Mammary epithelial cell (primary cell): ENCODE measurements at regions of chr4 and their contacts with region 1.

Region 1: DNA sequence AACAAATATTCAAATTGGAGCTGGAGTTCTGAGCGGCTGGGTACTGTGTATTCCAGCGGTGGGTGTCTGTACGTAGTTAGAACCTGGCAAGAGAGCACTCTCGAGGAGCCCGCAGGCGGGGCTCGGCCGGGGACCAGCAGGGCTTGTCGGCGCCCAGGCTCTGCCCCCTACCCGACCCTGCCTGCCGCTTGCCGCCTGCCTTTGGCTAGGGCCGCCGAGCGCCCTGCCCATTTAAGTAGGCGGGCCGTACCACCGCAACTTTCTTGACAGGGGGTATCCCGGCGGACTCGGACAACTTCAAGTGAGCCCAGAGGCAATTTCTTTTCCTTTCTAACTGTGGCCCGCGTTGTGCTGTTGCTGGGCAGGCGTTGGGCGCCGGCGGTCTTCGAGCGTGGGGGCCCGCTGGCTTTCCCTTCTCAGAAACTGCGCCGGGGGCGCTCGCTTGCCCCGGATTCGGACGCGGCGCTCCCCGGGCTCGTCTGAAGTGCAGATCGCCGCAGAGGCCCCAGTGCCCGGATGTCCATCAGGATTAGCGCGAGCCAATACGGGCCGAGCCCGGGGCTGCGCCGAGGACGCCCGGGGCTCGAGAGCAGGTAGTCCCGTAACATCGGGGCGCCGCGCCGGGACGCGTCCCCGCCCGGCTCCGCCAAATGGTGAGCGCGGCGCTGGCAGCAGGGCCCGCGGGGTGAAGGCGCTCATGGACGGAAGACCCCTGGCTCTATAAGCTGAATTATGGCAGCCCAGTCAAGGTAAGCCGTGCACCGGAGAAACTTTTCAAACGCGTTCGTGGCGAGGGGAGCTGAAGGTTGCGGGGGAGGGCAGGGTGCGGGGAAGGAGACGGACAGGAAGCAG is 72.1 kb downstream of the AFF1 start:
- DNase-seq: peak; percentile 93
- H3K4me3 ChIP-seq: peak overlapping the region; percentile 65 to 85 (median 81)
- H3K27ac ChIP-seq: peak overlapping the region; percentile 77
- H3K4me1 ChIP-seq: peaks cover 40% of the 10 kb centered on the region
- H3K27me3 ChIP-seq: no peaks in the 10 kb centered on the region
- CTCF ChIP-seq: peak in 1 of 2 donors; percentile 16

Region 2: GRCh38 chr4:86497980-86498862 is 508.7 kb before region 1 on chr4:
- CTCF ChIA-PET with region 1: no interaction called
- dilution Hi-C with region 1: no loop called
- in situ Hi-C with region 1: no loop called
- intact Hi-C with region 1: loop called (anchors 1 kb)
- DNase-seq: peak; percentile 40
- H3K4me3 ChIP-seq: no peak overlapping the region
- H3K27ac ChIP-seq: no peak overlapping the region
- H3K4me1 ChIP-seq: peaks cover 26% of the 10 kb centered on the region
- H3K27me3 ChIP-seq: no peaks in the 10 kb centered on the region
- CTCF ChIP-seq: peak; percentile 78 to 89

Region 3: DNA sequence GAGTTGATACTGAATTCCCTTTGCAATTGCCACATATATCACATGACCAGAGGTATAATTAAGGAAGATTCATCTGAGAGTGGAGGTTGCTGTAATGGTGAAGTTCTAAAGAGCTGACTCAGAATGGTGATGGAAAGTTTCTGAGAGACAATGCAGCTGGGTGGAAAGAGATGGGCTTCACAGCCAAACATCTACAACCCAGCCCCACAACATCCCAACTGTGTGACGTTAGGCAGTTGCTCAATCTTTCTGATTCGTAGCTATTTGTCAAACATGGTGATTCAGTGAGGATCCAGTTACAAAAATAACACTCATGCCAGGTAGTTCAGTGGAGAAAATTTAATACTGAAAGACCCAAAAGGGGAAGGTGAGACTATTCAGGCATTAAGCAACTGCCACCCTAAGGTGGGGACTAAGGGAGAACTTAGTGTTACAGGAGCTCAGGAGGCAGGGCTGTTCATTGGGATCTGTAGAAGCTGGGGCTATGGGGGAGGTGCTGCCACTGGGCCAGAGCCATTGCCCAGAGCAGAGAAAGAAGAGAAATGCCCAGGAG is 79.0 kb before region 1 on chr4:
- CTCF ChIA-PET with region 1: no interaction called
- dilution Hi-C with region 1: loop called (anchors 5 kb)
- in situ Hi-C with region 1: loop called in 1 of 2 experiments (anchors 5 kb)
- intact Hi-C with region 1: no loop called
- DNase-seq: peak; percentile 99
- H3K4me3 ChIP-seq: no peak overlapping the region
- H3K27ac ChIP-seq: peak overlapping the region; percentile 97
- H3K4me1 ChIP-seq: peaks cover 43% of the 10 kb centered on the region
- H3K27me3 ChIP-seq: no peaks in the 10 kb centered on the region
- CTCF ChIP-seq: no peak

Region 4: GRCh38 chr4:86977621-86978184 is 29.2 kb before region 1 on chr4:
- CTCF ChIA-PET with region 1: no interaction called
- dilution Hi-C with region 1: no loop called
- in situ Hi-C with region 1: no loop called
- intact Hi-C with region 1: loop called (anchors 1 kb)
- DNase-seq: peak; percentile 99
- H3K4me3 ChIP-seq: peak overlapping the region in 1 of 3 experiments; percentile 13
- H3K27ac ChIP-seq: peak overlapping the region; percentile 99
- H3K4me1 ChIP-seq: peaks cover 22% of the 10 kb centered on the region
- H3K27me3 ChIP-seq: no peaks in the 10 kb centered on the region
- CTCF ChIP-seq: no peak

Region 5: DNA sequence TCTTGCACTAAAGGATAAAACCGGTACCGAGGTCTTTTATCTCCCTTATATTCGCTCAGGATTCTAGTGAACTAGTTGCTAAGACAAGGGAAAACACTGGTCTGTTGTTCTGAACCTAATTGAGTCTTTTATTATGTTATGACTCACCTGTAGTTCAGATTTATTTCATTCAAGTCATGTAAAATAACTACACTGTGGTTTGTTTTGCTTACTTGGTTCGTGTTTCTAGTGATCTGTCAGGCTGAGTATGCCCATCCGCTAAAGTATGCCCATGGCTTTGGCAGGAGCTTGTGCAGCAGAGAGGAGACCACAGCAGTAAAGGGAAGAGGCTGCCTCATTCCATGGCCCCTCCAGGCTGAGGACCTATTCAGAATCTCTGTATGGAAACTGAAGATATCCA is 54.1 kb after region 1 on chr4:
- CTCF ChIA-PET with region 1: no interaction called
- dilution Hi-C with region 1: no loop called
- in situ Hi-C with region 1: no loop called
- intact Hi-C with region 1: loop called (anchors 5 kb)
- DNase-seq: peak; percentile 93
- H3K4me3 ChIP-seq: no peak overlapping the region
- H3K27ac ChIP-seq: peak overlapping the region; percentile 89
- H3K4me1 ChIP-seq: peaks cover 27% of the 10 kb centered on the region
- H3K27me3 ChIP-seq: no peaks in the 10 kb centered on the region
- CTCF ChIP-seq: no peak

Region 6: DNA sequence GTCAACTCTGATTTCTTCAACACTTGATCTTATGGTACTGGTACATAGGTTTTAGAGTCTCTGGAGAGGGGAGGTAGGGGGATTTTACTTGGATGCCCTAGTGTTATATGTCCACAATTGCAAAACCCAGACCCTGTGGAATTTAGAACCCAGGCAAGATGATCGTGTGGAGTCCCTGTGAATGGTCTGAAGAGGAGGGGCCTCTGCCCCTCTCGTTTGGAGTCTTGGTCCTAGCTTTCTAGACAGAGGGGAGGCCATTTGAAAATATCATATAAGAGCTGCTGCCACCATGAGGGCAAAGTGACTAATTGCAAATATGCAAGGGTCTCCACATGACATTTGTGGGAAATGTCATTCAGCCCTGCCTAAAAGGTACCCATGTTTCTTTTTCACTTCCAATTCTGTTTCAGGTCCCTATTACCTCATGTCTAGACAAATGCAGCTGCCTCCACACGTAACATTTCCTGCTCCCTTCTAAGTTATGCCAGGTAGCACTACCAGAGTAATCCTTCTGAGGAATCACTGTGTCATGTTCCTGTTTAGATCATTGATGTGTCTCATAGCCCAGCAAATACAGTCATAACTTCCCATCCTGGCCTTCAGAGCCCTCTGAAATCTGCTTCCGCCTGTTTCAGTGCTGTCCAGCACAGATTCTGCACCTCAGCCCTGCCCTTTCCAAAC is 86.7 kb after region 1 on chr4:
- CTCF ChIA-PET with region 1: interaction called, 6 read pairs
- dilution Hi-C with region 1: no loop called
- in situ Hi-C with region 1: no loop called
- intact Hi-C with region 1: loop called (anchors 1 kb)
- DNase-seq: peak; percentile 89
- H3K4me3 ChIP-seq: no peak overlapping the region
- H3K27ac ChIP-seq: peak overlapping the region; percentile 97
- H3K4me1 ChIP-seq: peaks cover 24% of the 10 kb centered on the region
- H3K27me3 ChIP-seq: no peaks in the 10 kb centered on the region
- CTCF ChIP-seq: peak; percentile 26 to 58